Natural killer cell (primary cell): ENCODE measurements at regions of chr19 and their contacts with region 1.

Region 1: DNA sequence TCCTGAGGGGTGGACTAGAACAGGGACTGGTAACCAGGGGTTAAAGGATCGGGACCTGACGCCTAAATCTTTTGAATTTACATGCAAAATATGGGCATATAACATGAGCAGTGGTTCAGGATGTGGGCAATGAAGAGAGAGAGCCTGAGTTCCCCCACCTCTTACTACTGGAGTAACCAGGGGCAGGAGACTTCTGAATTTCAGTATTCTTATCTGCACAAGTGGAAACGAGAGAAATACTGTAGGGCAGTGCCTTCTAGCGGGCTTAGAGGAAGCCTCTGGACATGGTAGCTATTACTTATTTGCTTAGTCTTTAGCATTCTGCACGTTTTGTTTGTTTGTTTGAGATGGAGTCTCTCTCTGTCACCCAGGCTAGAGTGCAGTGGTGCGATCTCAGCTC is 26.3 kb downstream of the BCAT2 start:
- DNase-seq: no peak
- ATAC-seq: no peak
- H3K4me3 ChIP-seq: no peak overlapping the region
- H3K4me3 Mint-ChIP-seq: no peak overlapping the region
- H3K27ac ChIP-seq: no peak overlapping the region
- H3K27ac Mint-ChIP-seq: no peak overlapping the region
- H3K4me1 ChIP-seq: peaks cover 8% of the 10 kb centered on the region
- H3K4me1 Mint-ChIP-seq: peaks cover 5% of the 10 kb centered on the region in 2 donors
- H3K27me3 ChIP-seq: no peaks in the 10 kb centered on the region
- H3K27me3 Mint-ChIP-seq: peaks cover 0 to 2% of the 10 kb centered on the region in 2 donors
- CTCF ChIP-seq: no peak

Region 2: DNA sequence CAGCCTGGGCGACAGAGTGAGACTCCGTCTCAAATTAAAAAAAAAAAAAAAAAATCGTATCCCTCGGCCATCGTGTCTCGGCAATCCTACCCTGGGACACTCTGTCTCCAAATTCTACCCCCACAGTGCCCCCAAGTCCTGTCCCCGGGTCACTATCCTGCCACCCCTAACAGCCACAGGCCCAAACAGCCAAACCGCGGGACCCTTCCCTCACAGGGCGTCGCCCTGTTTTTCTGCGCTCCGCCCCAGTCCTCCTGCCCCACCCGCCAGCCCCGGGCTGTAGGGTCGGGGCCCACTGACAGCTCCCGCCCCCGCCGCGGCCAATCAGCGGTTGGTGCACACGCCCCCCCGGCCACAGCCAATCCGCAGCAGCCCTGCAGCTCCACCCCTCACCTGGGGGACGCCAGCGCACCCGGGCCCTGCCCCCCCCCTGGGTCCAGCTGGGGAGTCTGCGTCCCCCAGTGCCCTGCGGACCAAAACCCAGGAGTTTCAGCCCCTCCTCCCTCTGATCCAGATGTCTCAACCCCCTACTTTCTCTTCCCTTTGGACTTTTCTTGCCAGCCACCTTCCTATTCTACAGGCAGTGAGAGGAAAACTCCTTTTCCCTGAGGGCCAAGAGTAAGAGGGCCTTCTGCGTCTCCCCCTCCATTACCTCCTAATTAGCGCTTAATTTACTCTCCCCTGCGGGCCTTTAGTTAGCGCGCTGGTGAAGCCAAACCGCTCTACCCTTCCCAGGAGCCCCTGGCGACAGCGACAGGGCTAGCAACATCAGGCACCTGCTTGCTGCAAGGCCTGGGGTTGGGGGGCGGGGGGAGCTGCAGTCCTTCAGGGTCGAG is 27.8 kb after region 1 on chr19:
- intact Hi-C with region 1: no loop called
- DNase-seq: peak in 1 of 2 donors; percentile 68
- ATAC-seq: peak; percentile 23 to 54 (median 48)
- H3K4me3 ChIP-seq: no peak overlapping the region
- H3K4me3 Mint-ChIP-seq: peak overlapping the region; percentile 84
- H3K27ac ChIP-seq: no peak overlapping the region
- H3K27ac Mint-ChIP-seq: peak overlapping the region in 1 of 2 donors; percentile 75
- H3K4me1 ChIP-seq: peaks cover 27% of the 10 kb centered on the region
- H3K4me1 Mint-ChIP-seq: peaks cover 17 to 26% of the 10 kb centered on the region in 2 donors
- H3K27me3 ChIP-seq: no peaks in the 10 kb centered on the region
- H3K27me3 Mint-ChIP-seq: no peaks in the 10 kb centered on the region
- CTCF ChIP-seq: no peak

Region 3: DNA sequence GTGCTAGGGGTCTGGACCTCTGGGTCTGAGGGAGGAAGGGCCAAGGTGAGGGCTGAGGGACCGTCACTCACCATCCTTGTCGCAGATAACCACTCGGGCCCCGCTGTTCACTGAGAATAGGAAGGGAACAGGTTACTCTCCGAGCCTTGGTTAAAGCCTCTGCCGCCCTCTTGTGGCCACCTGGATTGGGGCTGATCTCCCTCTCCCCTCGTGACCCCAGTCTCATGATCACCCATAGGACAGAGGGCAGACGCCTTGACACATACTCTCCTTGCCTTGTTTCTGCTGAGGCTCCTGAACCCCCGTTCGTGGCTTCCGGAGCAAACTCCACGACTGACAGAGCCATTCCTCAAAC is 51.2 kb after region 1 on chr19:
- intact Hi-C with region 1: loop called (anchors 1 kb)
- DNase-seq: peak; percentile 88 to 95
- ATAC-seq: peak; percentile 94 to 96 (median 96)
- H3K4me3 ChIP-seq: no peak overlapping the region
- H3K4me3 Mint-ChIP-seq: peak overlapping the region; percentile 69
- H3K27ac ChIP-seq: no peak overlapping the region
- H3K27ac Mint-ChIP-seq: peak overlapping the region; percentile 59 to 90
- H3K4me1 ChIP-seq: peaks cover 23% of the 10 kb centered on the region
- H3K4me1 Mint-ChIP-seq: peaks cover 14 to 23% of the 10 kb centered on the region in 2 donors
- H3K27me3 ChIP-seq: peaks cover 13% of the 10 kb centered on the region
- H3K27me3 Mint-ChIP-seq: peaks cover 0 to 25% of the 10 kb centered on the region in 2 donors
- CTCF ChIP-seq: peak; percentile 76

Region 4: DNA sequence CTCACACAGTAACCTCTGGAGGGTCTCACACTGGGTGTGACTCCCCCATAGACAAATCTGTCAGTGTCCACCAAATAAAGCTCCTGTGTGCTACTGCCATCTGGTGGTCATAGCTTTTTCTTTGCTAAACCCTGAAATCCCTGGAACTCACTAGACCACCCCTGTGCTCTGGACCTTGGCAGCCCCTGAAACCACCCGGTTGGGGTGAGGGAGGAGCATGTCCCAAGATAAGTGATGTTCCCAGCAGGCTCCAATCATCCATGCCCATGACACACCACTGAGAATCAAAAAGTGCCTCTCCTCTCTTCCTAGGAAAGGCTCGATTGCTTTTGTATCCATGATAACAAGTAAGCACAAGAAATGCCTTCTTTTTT is 58.2 kb after region 1 on chr19:
- intact Hi-C with region 1: loop called (anchors 1 kb)
- DNase-seq: peak; percentile 23 to 82
- ATAC-seq: peak; percentile 67 to 80 (median 73)
- H3K4me3 ChIP-seq: no peak overlapping the region
- H3K4me3 Mint-ChIP-seq: no peak overlapping the region
- H3K27ac ChIP-seq: no peak overlapping the region
- H3K27ac Mint-ChIP-seq: peak overlapping the region in 1 of 2 donors; percentile 4
- H3K4me1 ChIP-seq: no peaks in the 10 kb centered on the region
- H3K4me1 Mint-ChIP-seq: peaks cover 0 to 5% of the 10 kb centered on the region in 2 donors
- H3K27me3 ChIP-seq: no peaks in the 10 kb centered on the region
- H3K27me3 Mint-ChIP-seq: peaks cover 0 to 2% of the 10 kb centered on the region in 2 donors
- CTCF ChIP-seq: peak; percentile 82

Region 5: DNA sequence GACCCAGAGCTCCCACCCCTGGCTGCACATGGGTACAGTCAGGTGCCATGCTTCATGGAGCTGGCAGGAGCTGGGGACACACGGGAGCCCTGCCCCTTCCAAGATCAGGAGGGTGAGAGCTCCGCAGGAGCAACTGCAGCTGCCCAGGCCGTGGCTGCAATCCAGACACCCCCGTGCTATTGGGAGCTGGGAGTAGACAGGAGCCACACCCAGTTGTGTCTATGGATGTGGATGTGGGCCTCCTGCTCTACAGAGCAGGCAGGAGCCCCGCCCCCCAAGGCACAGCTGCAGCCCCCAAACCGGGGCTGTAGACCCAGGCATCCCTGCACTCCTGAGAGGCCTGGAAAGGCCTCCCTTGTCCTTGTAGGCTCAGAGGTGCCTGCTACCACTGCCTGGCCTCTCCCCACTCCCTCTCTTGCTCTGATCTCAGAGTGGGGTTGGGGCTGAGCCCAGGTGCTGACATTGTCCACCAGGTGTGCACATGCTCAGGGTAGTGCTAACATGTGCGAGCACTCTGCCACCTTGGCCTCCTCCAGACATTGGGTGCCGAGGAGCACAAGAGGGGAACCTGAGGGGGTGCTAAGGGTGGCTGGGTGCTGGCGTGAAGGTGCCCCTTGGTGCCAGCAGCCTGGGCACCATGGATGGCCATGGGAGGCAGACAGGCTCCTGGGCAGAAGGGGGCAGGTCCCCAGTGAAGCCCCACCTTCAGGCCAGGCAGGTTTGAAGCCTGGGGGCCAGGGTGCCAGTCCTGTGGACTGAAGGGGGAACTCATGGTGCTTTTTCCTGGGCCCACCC is 162.1 kb after region 1 on chr19:
- intact Hi-C with region 1: no loop called
- DNase-seq: no peak
- ATAC-seq: no peak
- H3K4me3 ChIP-seq: no peak overlapping the region
- H3K4me3 Mint-ChIP-seq: no peak overlapping the region
- H3K27ac ChIP-seq: no peak overlapping the region
- H3K27ac Mint-ChIP-seq: no peak overlapping the region
- H3K4me1 ChIP-seq: no peaks in the 10 kb centered on the region
- H3K4me1 Mint-ChIP-seq: no peaks in the 10 kb centered on the region
- H3K27me3 ChIP-seq: no peaks in the 10 kb centered on the region
- H3K27me3 Mint-ChIP-seq: no peaks in the 10 kb centered on the region
- CTCF ChIP-seq: no peak

Region 6: GRCh38 chr19:48970923-48971395 is 186.4 kb after region 1 on chr19:
- intact Hi-C with region 1: loop called (anchors 1 kb)
- DNase-seq: peak; percentile 80 to 92
- ATAC-seq: peak; percentile 85 to 94 (median 91)
- H3K4me3 ChIP-seq: no peak overlapping the region
- H3K4me3 Mint-ChIP-seq: no peak overlapping the region
- H3K27ac ChIP-seq: no peak overlapping the region
- H3K27ac Mint-ChIP-seq: no peak overlapping the region
- H3K4me1 ChIP-seq: peaks cover 27% of the 10 kb centered on the region
- H3K4me1 Mint-ChIP-seq: peaks cover 8 to 12% of the 10 kb centered on the region in 2 donors
- H3K27me3 ChIP-seq: no peaks in the 10 kb centered on the region
- H3K27me3 Mint-ChIP-seq: no peaks in the 10 kb centered on the region
- CTCF ChIP-seq: peak; percentile 83

Region 7: DNA sequence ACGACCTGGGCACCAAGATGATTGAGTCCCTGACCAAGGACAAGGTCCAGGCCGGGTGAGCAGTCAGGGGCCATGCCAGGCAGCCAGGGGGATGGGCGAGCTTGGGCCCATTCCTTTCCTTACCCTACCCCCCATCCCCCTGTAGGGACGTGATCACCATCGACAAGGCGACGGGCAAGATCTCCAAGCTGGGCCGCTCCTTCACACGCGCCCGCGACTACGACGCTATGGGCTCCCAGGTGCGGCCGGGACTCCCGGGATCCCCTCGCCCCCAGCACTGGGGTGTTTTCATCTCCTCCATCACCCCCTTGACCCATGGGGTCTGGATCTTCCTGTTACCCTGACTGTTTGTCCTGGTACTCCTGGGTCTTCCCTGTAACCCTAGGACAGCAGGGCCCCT is 225.3 kb after region 1 on chr19:
- intact Hi-C with region 1: no loop called
- DNase-seq: no peak
- ATAC-seq: no peak
- H3K4me3 ChIP-seq: no peak overlapping the region
- H3K4me3 Mint-ChIP-seq: no peak overlapping the region
- H3K27ac ChIP-seq: no peak overlapping the region
- H3K27ac Mint-ChIP-seq: no peak overlapping the region
- H3K4me1 ChIP-seq: no peaks in the 10 kb centered on the region
- H3K4me1 Mint-ChIP-seq: no peaks in the 10 kb centered on the region
- H3K27me3 ChIP-seq: no peaks in the 10 kb centered on the region
- H3K27me3 Mint-ChIP-seq: no peaks in the 10 kb centered on the region
- CTCF ChIP-seq: no peak